PC-9 (cell line): ENCODE measurements at regions of chr7 and their contacts with region 1.

Region 1: GRCh38 chr7:148877517-148877916 is 6.6 kb downstream of the EZH2 start:
- DNase-seq: no peak
- H3K4me3 ChIP-seq: no peak overlapping the region
- H3K27ac ChIP-seq: no peak overlapping the region
- H3K4me1 ChIP-seq: peaks cover 13% of the 10 kb centered on the region
- H3K27me3 ChIP-seq: no peaks in the 10 kb centered on the region
- CTCF ChIP-seq: no peak

Region 2: GRCh38 chr7:148461392-148462179 is 415.9 kb before region 1 on chr7:
- CTCF ChIA-PET with region 1: no interaction called
- POLR2A ChIA-PET with region 1: no interaction called
- intact Hi-C with region 1: no loop called
- DNase-seq: no peak
- H3K4me3 ChIP-seq: no peak overlapping the region
- H3K27ac ChIP-seq: no peak overlapping the region
- H3K4me1 ChIP-seq: no peaks in the 10 kb centered on the region
- H3K27me3 ChIP-seq: peaks cover 46% of the 10 kb centered on the region
- CTCF ChIP-seq: no peak

Region 3: DNA sequence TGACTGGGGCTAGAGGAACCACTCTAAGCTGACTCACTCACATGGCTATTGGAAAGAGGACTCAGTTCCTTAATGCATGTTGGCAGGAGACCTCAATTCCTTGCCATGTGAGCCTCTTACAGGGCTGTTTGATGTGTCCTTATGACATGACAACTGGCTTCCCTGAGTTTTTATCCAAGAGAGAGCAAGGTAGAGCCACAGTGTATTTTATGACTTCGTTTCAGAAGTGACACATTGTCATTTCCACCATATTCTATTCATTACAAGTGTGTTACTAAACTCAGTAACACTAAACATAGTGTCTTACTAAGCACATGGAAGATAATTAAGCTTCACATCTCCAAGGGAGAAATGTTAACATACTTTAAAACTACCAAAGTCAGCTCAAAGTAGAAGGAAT is 485.2 kb after region 1 on chr7:
- CTCF ChIA-PET with region 1: interaction called, 11 read pairs
- POLR2A ChIA-PET with region 1: no interaction called
- intact Hi-C with region 1: no loop called
- DNase-seq: no peak
- H3K4me3 ChIP-seq: no peak overlapping the region
- H3K27ac ChIP-seq: no peak overlapping the region
- H3K4me1 ChIP-seq: peaks cover 10% of the 10 kb centered on the region
- H3K27me3 ChIP-seq: no peaks in the 10 kb centered on the region
- CTCF ChIP-seq: no peak